ENCODE measurements at regions of chr7 and their contacts with region 1.

Region 1: DNA sequence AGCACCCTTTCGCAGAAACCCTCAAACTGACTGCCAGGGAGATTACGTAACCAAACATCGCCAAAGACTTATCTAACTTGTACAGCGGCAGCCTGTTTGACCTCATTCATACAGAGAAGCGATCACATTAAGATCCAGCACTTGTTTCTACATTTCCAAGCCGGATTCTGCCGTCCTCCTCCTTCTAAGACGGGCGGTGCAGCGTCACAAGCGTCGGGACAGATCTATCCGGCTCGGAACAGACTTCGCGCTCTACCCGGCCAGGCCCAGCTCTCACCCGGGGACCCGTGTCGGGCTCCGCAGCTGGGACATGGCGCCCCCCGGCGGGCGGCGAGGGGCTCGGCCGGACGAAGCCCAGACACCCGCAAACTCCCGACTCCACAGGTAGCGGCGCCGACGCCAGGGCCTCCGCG is 373 bp downstream of the H2AZ2 start:
- DNase-seq: peak; percentile 88
- ATAC-seq: peak; percentile 67
- H3K4me3 Mint-ChIP-seq: peak overlapping the region; percentile 93
- H3K27ac Mint-ChIP-seq: peak overlapping the region; percentile 99
- H3K4me1 Mint-ChIP-seq: peaks cover 42% of the 10 kb centered on the region
- H3K27me3 Mint-ChIP-seq: no peaks in the 10 kb centered on the region

Region 2: DNA sequence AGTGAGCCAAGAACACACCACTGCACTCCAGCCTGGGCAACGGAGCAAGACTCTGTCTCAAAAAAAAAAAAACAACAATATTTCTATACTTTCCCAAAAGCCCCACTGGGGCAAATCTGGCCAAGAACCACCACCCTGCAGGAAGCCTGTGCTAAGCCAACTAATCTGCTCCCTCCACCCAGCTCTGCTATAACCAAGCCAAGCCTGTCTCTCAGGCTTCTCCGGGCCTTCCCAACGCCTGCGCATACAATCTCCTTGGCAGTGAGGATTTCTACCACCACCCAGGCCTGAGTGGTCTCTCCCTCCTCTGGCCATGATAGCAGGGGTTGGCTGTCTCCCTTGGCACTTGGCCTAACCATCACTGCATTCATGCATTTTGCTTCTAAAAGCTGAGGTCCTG is 288.0 kb before region 1 on chr7:
- CTCF ChIA-PET with region 1: no interaction called
- POLR2A ChIA-PET with region 1: no interaction called
- DNase-seq: no peak
- ATAC-seq: no peak
- H3K4me3 Mint-ChIP-seq: no peak overlapping the region
- H3K27ac Mint-ChIP-seq: no peak overlapping the region
- H3K4me1 Mint-ChIP-seq: no peaks in the 10 kb centered on the region
- H3K27me3 Mint-ChIP-seq: peaks cover 6% of the 10 kb centered on the region

Region 3: DNA sequence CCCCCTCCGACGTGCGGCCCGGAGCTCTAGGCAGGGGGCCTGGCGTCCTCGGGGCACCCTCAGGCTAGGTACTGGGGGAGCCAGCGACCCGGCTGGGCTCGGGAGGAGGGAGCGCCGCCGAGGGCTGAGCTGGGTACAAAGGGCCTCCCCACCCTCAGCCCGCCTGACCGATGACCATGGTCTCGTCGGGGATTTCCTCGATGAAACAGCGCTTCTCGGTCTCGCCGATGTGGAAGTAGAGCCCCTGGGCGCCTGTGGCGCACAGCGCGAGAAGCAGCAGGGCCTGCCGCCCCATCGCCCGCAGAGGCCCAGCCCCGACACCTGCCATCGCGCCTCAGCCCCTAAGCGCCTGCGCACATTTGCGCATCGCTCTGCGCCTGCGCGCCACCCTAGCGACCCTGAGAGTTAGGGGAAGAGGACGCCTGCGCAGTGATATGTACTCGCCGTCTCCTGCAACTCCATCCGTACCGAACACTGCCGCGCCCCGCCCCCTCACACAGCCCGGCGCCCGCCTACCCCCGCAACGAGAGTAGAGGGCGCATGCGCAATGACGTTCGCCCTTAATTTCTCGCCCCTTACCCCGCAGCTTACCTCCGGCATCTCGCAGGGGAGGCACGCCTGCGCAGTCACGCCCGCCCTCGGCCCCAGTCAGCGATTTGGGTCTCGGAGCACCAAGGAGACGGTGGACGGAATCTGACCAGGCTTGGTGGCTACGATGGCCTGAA is 265.5 kb before region 1 on chr7 and contains the start of gene TMED4:
- CTCF ChIA-PET with region 1: interaction called, 4 read pairs
- POLR2A ChIA-PET with region 1: interaction called, 31 read pairs
- DNase-seq: peak; percentile 100
- ATAC-seq: peak; percentile 95
- H3K4me3 Mint-ChIP-seq: peak within 1 kb of the TSS; percentile 93
- H3K27ac Mint-ChIP-seq: peak within 1 kb of the TSS; percentile 91
- H3K4me1 Mint-ChIP-seq: peaks cover 38% of the 10 kb centered on the region
- H3K27me3 Mint-ChIP-seq: peaks cover 3% of the 10 kb centered on the region
- total RNA-seq, gene TMED4: 63.8 to 65.9 TPM

Region 4: DNA sequence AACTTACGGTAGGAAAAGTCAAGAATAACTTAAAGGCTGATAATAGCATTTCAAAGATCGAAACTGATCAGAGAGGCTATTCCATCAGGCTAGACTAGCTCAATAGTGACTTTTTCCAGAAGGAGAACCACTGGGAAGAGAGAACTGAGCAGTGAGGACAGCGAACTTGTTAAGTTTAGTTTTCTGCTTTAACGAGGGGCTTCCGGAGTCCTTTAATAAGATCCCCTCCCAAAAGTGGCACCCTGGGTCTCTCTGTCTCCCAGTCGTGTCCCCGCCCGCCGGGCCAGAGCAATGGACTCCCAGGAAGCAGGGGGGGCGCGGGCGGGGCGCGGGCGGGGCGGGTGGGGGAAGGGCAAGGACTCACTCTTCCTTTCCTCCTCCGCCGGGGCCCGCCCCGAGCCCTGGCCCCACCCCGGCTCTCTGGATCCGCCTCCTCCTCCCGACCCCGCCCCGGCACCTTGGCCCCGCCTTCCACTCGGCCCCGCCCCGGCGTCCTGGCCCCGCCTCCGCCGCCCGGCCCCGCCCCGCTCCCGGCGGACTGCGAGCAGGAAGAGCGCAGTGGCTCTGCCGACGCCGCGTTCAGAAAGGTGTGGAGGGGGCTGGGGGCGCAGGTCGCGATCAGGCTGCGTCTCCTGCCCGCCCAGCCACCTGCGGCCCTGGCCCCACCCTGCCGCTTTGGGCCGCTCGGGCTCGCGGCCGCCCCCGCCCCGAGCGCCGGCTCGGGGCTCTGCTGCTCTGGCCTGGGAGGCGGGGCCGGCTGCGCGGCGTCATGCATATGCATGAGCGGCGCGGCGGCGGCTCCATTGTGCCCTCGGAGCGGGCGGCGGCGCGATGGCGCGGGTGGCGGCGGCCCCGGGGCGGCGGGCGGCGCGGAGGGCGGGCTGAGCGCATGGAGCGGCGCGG is 99.2 kb before region 1 on chr7 and contains the start of gene ZMIZ2:
- CTCF ChIA-PET with region 1: interaction called, 6 read pairs
- POLR2A ChIA-PET with region 1: interaction called, 16 read pairs
- DNase-seq: peak; percentile 92
- ATAC-seq: peak; percentile 87
- H3K4me3 Mint-ChIP-seq: peak within 1 kb of the TSS; percentile 74
- H3K27ac Mint-ChIP-seq: peak within 1 kb of the TSS; percentile 84
- H3K4me1 Mint-ChIP-seq: peaks cover 37% of the 10 kb centered on the region
- H3K27me3 Mint-ChIP-seq: no peaks in the 10 kb centered on the region
- total RNA-seq, gene ZMIZ2: 77.8 to 80.7 TPM

Region 5: GRCh38 chr7:44858161-44858560 is 10.6 kb after region 1 on chr7:
- CTCF ChIA-PET with region 1: interaction called, 56 read pairs
- POLR2A ChIA-PET with region 1: interaction called, 17 read pairs
- DNase-seq: no peak
- ATAC-seq: no peak
- H3K4me3 Mint-ChIP-seq: no peak overlapping the region
- H3K27ac Mint-ChIP-seq: no peak overlapping the region
- H3K4me1 Mint-ChIP-seq: peaks cover 13% of the 10 kb centered on the region
- H3K27me3 Mint-ChIP-seq: peaks cover 4% of the 10 kb centered on the region

Region 6: GRCh38 chr7:44914992-44915607 is 67.6 kb after region 1 on chr7:
- CTCF ChIA-PET with region 1: interaction called, 32 read pairs
- POLR2A ChIA-PET with region 1: interaction called, 15 read pairs
- DNase-seq: peak; percentile 85
- ATAC-seq: peak; percentile 92
- H3K4me3 Mint-ChIP-seq: peak overlapping the region; percentile 13
- H3K27ac Mint-ChIP-seq: peak overlapping the region; percentile 86
- H3K4me1 Mint-ChIP-seq: peaks cover 34% of the 10 kb centered on the region
- H3K27me3 Mint-ChIP-seq: no peaks in the 10 kb centered on the region

Region 7: DNA sequence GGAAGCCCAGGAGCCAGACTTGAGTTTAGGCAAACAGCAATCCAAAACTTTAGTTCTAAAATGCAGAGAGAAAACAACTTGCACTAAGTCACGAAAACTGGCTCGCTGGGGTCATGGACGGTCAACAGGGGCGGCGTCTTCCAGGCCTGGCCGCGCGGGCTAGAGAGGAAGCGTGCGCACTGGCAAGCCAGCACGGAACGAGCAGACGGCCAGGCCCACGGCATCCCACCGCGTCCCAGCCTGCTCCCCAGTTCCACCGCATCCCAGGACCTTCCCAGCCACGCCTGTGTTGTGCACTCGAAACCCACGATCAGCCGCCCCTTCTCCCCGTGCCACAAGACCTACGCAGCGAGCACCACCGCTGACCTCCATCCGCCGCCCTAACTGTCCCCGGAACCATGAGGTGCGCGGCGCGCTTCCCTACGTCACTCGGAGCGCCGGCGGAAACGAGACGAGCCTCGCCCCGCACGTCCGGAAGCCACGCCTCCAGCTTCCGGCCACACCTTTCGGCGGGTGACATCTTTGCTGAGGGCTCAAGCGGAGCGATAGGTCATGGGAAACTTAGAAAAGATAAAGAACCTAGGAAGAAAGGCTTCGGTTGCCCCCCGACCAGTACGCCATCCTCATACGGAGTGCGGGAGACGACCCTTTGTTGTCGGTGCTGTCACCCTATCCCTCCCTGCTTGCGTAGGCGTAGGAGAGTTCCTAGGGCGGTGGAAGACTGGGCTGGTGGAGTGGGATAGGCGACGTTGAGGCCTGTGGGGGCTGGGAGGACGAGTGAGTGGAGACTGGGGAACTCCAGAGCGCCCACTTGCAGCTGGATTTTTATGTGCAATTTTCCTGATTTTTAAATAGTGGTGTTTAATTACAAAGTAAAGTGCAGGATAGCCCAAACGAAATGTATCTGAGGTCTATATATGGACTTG is 264.0 kb after region 1 on chr7 and contains the start of gene TBRG4:
- CTCF ChIA-PET with region 1: interaction called, 3 read pairs
- POLR2A ChIA-PET with region 1: interaction called, 12 read pairs
- DNase-seq: peak; percentile 97
- ATAC-seq: peak; percentile 90
- H3K4me3 Mint-ChIP-seq: peak within 1 kb of the TSS; percentile 90
- H3K27ac Mint-ChIP-seq: peak within 1 kb of the TSS; percentile 97
- H3K4me1 Mint-ChIP-seq: peaks cover 41% of the 10 kb centered on the region
- H3K27me3 Mint-ChIP-seq: peaks cover 16% of the 10 kb centered on the region
- total RNA-seq, gene TBRG4: 133 to 137 TPM

Measured in activated CD8-positive, alpha-beta T cell treated with anti-CD3 and anti-CD28 coated beads, Interleukin-2, amount 10 ng/mL, durations not matched to agents 7 days and 5 days (primary cell).